Activated CD4-positive, alpha-beta T cell treated with anti-CD3 and anti-CD28 coated beads for 36 hours (primary cell): ENCODE measurements at regions of chr6 and their contacts with region 1.

Region 1: DNA sequence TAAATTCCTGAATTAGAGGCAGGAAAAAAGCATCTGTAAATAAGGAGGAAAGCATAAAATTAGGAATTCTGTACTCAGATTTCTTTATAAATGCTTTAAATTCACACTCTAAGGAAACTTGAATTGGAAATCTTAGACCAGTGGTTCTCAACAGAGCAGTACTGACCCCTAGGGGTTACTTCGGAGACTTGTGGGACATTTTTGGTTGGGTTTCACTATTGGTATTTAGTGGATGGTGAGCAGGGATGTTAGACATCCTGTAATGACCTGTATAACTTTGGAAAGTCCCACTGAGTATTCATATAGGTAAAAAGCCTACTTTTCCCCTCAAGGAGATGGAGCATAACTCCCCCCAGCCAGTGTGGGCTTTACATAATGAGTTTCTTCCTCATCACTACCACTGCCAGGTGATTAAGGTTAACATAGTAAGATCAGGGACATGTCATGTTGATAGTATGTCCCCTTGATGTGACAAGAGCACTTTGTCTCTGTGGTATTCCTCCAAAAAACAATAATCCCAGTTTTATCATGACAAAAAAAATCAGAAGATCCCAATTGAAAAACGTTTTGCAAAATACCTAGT is 31.0 kb downstream of the GLO1 start:
- DNase-seq: peak; percentile 41
- ATAC-seq: peak; percentile 90
- H3K4me3 Mint-ChIP-seq: no peak overlapping the region
- H3K27ac Mint-ChIP-seq: no peak overlapping the region
- H3K4me1 Mint-ChIP-seq: peaks cover 27% of the 10 kb centered on the region
- H3K27me3 Mint-ChIP-seq: no peaks in the 10 kb centered on the region

Region 2: DNA sequence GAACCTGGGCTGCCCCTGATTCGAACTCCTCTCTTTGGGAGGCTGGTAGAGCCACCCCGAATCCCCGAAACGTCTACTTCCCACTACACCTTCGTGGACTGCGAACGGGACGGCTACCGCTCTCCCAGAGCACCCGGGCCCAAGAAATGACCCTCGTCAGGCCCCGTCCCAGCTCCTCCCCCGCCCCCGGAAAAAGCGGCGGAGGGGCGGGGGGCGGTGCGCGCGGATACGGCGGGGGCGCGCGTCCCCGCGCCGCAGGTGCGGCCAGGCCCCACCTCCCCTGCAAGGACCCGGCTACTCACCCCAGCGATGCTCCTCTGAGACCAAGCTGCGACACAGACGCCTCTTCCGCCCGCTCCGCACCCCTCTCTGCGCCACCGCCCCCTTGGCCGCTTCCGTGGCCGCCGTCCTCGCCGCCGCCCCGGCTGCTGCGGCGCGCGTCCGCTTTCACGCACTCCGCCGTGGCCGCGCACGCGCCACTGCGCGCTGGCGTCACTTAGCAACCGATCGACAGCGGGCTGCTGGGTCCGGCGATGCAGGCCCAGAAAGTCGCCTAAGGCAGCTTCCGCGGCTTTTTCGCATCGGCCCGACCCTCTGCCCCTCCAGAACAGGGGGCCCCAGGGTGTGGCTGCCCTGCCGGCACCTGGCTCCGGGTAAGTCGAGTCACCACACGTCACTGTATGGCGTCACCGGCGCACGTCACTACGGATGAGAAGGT is 32.3 kb before region 1 on chr6 and contains the start of gene BTBD9:
- CTCF ChIA-PET with region 1: no interaction called
- POLR2A ChIA-PET with region 1: no interaction called
- intact Hi-C with region 1: loop called in 1 of 2 experiments (anchors 2 kb)
- DNase-seq: peak; percentile 89
- ATAC-seq: peak; percentile 71
- H3K4me3 Mint-ChIP-seq: peak within 1 kb of the TSS; percentile 82
- H3K27ac Mint-ChIP-seq: peak within 1 kb of the TSS; percentile 82
- H3K4me1 Mint-ChIP-seq: peaks cover 40% of the 10 kb centered on the region
- H3K27me3 Mint-ChIP-seq: no peaks in the 10 kb centered on the region
- total RNA-seq, gene BTBD9: 8.2 to 12.2 TPM

Region 3: DNA sequence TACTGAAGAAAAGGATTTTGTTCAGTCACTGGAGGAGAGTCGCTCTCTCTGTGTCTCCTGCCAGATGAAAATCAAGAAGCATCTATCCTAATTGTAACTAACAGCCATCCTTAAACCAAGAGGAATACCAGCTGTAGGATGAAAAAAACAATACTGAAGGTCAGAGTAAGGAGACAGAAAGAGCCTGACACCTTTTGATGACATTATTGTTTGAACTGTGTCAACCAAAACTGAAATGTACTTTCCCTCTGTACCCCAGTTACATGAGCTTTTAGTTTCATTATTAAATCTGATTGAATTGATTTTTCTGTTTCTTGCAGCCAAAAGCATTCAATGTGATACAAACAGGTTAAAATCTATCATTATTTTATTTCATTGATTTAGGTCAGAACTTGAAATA is 15.1 kb before region 1 on chr6:
- CTCF ChIA-PET with region 1: no interaction called
- POLR2A ChIA-PET with region 1: no interaction called
- intact Hi-C with region 1: no loop called
- DNase-seq: no peak
- ATAC-seq: no peak
- H3K4me3 Mint-ChIP-seq: no peak overlapping the region
- H3K27ac Mint-ChIP-seq: no peak overlapping the region
- H3K4me1 Mint-ChIP-seq: no peaks in the 10 kb centered on the region
- H3K27me3 Mint-ChIP-seq: no peaks in the 10 kb centered on the region

Region 4: GRCh38 chr6:38713812-38714211 is 41.8 kb after region 1 on chr6:
- CTCF ChIA-PET with region 1: no interaction called
- POLR2A ChIA-PET with region 1: no interaction called
- intact Hi-C with region 1: loop called in 1 of 2 experiments (anchors 2 kb)
- DNase-seq: peak; percentile 78
- ATAC-seq: peak; percentile 74
- H3K4me3 Mint-ChIP-seq: no peak overlapping the region
- H3K27ac Mint-ChIP-seq: peak overlapping the region; percentile 39
- H3K4me1 Mint-ChIP-seq: peaks cover 22% of the 10 kb centered on the region
- H3K27me3 Mint-ChIP-seq: peaks cover 17% of the 10 kb centered on the region